HEK293T (cell line): ENCODE measurements at regions of chr11 and their contacts with region 1.

Region 1: DNA sequence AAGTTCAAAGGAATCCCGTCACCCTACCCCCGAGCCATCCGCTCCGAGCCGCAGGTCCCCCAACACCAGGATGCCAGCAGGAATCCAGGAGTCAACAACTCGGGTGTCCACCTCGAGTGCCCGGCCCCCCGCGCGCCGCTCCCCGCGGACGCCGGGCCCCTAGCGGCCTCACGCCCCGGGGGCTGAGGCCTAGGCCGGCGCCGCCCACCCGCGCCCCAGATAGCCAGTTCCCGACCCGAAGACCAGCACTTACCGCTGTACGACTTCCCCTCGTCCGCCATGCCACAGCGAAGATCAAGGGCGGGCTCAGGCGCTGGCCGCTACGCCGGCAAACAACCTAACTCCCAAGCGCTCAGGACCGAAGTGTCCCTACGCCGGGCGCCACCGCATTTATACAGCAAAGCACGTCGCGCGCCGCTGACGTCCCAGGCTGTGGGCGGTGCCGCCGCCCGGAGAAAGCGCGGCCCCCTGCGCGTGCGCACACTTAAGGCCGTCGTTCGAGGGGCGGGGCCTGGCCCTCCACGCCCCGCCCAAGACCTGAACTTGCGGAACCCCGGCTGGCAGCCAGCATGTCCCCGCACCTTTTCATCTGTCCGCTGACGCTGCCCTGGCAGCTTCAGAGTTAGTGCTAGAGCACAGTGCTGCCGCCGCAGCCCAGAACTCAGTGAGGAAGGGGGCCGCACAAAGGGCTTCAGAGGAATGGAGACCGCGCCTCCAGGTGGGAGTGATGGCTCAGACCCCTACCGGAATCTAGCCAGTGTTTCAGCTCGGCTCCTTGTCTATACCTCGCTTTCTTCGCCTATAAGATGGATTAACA is at the start of gene NXF1:
- DNase-seq: peak; percentile 99

Region 2: DNA sequence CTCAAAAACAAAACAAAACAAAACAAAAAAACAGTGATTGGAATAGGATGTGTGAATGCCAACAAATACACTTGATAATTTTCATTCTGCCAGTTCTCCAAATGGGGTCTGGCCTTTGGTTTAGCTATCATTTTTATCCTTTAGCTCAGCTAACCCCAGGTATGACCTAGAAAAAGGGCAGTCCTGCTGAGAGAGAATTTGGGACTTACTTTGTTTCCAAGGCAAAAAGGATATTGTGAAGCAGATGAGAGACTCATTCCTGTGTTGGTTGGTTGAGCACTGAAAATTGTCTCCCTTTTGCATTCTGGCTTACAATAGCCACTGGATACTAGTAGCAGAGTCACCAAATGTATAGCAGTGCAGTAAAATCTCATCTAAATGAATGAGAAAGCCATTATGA is 68.1 kb before region 1 on chr11:
- CTCF ChIA-PET with region 1: no interaction called
- POLR2A ChIA-PET with region 1: no interaction called
- DNase-seq: no peak

Region 3: GRCh38 chr11:62831520-62832335 is 26.4 kb after region 1 on chr11 and contains the start of gene STX5:
- CTCF ChIA-PET with region 1: interaction called, 3 read pairs
- POLR2A ChIA-PET with region 1: interaction called, 14 read pairs
- DNase-seq: peak; percentile 95